Mammary epithelial cell (primary cell): ENCODE measurements at regions of chr1 and their contacts with region 1.

Region 1: DNA sequence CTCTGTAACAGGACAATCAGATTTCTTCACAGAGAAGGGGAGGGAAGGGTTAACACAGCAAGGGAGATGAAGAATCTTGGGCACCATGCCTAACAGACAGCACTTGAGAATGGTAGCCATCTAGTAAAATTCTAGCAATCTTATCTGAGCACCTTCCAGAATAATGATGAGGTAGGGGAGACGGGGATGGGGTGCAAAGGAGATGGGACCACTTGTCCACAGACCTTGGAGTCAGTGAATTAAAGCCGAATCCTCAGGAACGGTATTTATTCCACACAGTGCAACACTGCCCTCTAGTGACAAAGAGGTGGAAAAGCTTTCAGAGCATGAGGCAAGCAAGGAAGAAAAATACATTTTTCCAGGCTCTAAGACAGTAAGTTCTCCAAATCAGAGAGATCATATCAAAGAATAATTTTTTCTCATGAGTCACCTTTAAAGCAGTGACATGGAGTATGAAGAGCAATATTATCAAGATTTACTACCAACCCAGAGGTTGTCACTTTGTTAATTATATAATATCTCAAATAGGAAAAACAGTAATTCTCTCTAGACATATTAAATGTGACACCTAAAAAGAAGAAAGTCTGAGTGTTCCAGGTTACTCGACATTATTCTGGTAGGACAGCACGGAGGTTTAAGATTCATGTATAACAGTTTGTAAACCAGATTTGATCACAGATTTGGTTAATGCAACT is 43.3 kb upstream of the LPAR3 start:
- DNase-seq: peak; percentile 54
- H3K4me3 ChIP-seq: no peak overlapping the region
- H3K27ac ChIP-seq: no peak overlapping the region
- H3K4me1 ChIP-seq: peaks cover 13% of the 10 kb centered on the region
- H3K27me3 ChIP-seq: no peaks in the 10 kb centered on the region
- CTCF ChIP-seq: peak; percentile 91 to 99

Region 2: GRCh38 chr1:84135341-84135740 is 800.9 kb before region 1 on chr1:
- CTCF ChIA-PET with region 1: no interaction called
- dilution Hi-C with region 1: no loop called
- in situ Hi-C with region 1: no loop called
- intact Hi-C with region 1: loop called (anchors 5 kb)
- DNase-seq: no peak
- H3K4me3 ChIP-seq: no peak overlapping the region
- H3K27ac ChIP-seq: no peak overlapping the region
- H3K4me1 ChIP-seq: no peaks in the 10 kb centered on the region
- H3K27me3 ChIP-seq: no peaks in the 10 kb centered on the region
- CTCF ChIP-seq: no peak

Region 3: GRCh38 chr1:84442256-84442655 is 494.0 kb before region 1 on chr1:
- CTCF ChIA-PET with region 1: no interaction called
- dilution Hi-C with region 1: no loop called
- in situ Hi-C with region 1: loop called (anchors 5 to 10 kb)
- intact Hi-C with region 1: loop called (anchors 2 kb)
- DNase-seq: peak; percentile 83
- H3K4me3 ChIP-seq: no peak overlapping the region
- H3K27ac ChIP-seq: no peak overlapping the region
- H3K4me1 ChIP-seq: peaks cover 8% of the 10 kb centered on the region
- H3K27me3 ChIP-seq: no peaks in the 10 kb centered on the region
- CTCF ChIP-seq: peak; percentile 53 to 60

Region 4: DNA sequence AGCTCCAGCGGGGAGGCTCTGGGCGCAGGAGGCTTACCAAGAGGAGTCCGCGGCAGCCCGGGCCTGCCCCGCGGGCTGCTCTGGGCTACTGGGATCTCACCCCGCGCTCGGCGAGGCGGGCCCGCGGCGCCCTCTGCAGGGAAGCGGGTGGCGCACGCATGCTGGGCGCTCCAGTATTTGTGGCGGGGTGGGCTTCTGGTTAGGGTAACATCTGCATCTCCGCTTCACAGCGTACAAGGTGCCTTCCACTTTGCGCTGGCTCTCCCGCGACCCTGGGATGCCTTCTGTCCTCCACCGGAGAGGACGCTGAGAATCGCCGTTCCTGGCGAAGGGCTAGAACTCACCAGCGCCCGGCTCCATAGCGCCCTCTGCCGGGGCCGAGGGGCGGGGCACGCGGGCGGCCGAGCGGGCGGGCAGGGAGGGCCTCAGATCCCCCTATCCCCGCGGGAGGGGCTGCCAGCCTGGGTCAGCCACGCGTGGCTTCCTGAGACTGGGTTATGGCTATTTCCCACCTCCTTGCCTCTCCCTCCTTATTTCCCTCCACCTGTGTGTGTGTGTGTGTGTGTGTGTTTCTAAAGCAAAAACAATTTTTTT is 315.4 kb before region 1 on chr1:
- CTCF ChIA-PET with region 1: no interaction called
- dilution Hi-C with region 1: no loop called
- in situ Hi-C with region 1: loop called in 1 of 2 experiments (anchors 25 kb)
- intact Hi-C with region 1: loop called (anchors 2 kb)
- DNase-seq: peak; percentile 70
- H3K4me3 ChIP-seq: peak overlapping the region; percentile 58 to 72 (median 64)
- H3K27ac ChIP-seq: peak overlapping the region; percentile 34
- H3K4me1 ChIP-seq: peaks cover 13% of the 10 kb centered on the region
- H3K27me3 ChIP-seq: no peaks in the 10 kb centered on the region
- CTCF ChIP-seq: peak; percentile 55 to 77

Region 5: GRCh38 chr1:84753516-84754385 is 182.5 kb before region 1 on chr1:
- CTCF ChIA-PET with region 1: no interaction called
- dilution Hi-C with region 1: no loop called
- in situ Hi-C with region 1: no loop called
- intact Hi-C with region 1: loop called (anchors 1 kb)
- DNase-seq: peak; percentile 54
- H3K4me3 ChIP-seq: no peak overlapping the region
- H3K27ac ChIP-seq: no peak overlapping the region
- H3K4me1 ChIP-seq: peaks cover 24% of the 10 kb centered on the region
- H3K27me3 ChIP-seq: no peaks in the 10 kb centered on the region
- CTCF ChIP-seq: peak; percentile 96 to 99

Region 6: DNA sequence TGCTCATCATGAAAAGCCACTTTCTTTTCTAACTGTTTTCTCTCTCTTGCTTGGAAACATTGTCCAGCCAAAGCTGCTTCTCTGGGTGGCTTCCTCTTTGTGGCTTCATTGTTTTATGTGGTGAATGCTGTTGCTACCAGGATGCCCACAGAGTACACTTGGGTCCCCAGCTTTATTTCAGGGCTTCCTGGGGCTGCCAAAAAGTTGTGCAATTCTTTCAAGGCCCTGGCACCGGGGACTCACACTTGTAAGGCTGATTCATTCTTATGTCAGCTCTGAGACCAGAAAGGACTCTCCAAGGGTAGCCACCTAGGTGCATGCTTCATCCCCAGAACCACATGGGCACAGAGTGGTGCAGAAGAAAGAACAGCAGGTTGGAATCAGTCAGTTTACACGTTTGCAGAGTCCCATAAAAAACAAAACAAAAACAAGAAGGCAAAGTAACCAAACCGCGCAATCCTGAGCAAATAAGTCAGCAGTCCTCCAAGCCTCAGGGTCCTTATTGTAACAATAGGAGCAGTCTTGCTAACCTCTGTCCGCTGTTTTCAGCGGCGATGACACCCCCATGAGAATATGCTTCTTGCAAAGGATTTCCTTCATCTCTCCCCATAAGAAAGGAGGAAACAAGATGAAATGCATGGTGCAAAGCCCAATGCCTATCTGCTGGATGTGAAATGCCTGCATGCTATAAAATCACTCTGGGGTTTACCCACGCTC is 156.1 kb before region 1 on chr1:
- CTCF ChIA-PET with region 1: no interaction called
- dilution Hi-C with region 1: loop called (anchors 5 kb)
- in situ Hi-C with region 1: loop called in 1 of 2 experiments (anchors 5 kb)
- intact Hi-C with region 1: no loop called
- DNase-seq: peak; percentile 76
- H3K4me3 ChIP-seq: no peak overlapping the region
- H3K27ac ChIP-seq: no peak overlapping the region
- H3K4me1 ChIP-seq: peaks cover 15% of the 10 kb centered on the region
- H3K27me3 ChIP-seq: no peaks in the 10 kb centered on the region
- CTCF ChIP-seq: no peak

Region 7: GRCh38 chr1:84988588-84988987 is 52.3 kb after region 1 on chr1:
- CTCF ChIA-PET with region 1: no interaction called
- dilution Hi-C with region 1: no loop called
- in situ Hi-C with region 1: no loop called
- intact Hi-C with region 1: no loop called
- DNase-seq: no peak
- H3K4me3 ChIP-seq: no peak overlapping the region
- H3K27ac ChIP-seq: no peak overlapping the region
- H3K4me1 ChIP-seq: no peaks in the 10 kb centered on the region
- H3K27me3 ChIP-seq: no peaks in the 10 kb centered on the region
- CTCF ChIP-seq: no peak